Panc1 (cell line): ENCODE measurements at regions of chr7 and their contacts with region 1.

Region 1: DNA sequence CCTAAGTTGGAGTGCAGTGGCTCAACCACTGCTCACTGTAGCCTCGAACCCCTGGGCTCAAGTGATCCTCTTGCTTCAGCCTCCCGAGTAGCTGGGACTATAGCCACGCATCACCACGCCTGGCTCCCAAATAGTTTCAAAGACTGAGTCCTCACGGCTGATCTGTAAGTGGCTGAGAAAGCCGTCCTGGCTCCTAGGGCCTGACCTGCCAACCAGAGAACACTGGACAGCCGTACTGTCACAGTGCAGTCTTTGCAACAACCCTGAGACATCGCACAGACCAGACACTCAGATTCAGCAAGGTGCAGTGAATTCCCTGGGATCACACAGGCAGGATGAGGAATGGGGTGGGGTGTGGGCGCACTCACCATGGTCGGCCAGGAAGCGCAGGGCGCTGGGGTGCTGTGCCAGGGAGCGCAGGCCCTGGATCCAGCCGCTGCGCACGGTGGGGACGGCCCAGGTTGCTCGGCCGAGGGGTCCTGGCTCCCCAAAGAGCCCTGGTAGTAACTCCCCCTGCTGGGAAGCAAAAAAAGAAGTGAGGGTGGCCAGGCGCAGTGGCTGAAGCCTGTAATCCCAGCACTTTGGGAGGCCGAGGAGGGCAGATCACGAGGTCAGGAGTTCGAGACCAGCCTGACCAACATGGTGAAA is 10.7 kb downstream of the BRAT1 start:
- DNase-seq: no peak
- ATAC-seq: peak; percentile 6; the same call in 1 of the 2 replicates
- H3K4me3 ChIP-seq: no peak overlapping the region
- H3K27ac ChIP-seq: no peak overlapping the region
- H3K4me1 ChIP-seq: no peaks in the 10 kb centered on the region
- H3K27me3 ChIP-seq: no peaks in the 10 kb centered on the region
- CTCF ChIP-seq: no peak

Region 2: DNA sequence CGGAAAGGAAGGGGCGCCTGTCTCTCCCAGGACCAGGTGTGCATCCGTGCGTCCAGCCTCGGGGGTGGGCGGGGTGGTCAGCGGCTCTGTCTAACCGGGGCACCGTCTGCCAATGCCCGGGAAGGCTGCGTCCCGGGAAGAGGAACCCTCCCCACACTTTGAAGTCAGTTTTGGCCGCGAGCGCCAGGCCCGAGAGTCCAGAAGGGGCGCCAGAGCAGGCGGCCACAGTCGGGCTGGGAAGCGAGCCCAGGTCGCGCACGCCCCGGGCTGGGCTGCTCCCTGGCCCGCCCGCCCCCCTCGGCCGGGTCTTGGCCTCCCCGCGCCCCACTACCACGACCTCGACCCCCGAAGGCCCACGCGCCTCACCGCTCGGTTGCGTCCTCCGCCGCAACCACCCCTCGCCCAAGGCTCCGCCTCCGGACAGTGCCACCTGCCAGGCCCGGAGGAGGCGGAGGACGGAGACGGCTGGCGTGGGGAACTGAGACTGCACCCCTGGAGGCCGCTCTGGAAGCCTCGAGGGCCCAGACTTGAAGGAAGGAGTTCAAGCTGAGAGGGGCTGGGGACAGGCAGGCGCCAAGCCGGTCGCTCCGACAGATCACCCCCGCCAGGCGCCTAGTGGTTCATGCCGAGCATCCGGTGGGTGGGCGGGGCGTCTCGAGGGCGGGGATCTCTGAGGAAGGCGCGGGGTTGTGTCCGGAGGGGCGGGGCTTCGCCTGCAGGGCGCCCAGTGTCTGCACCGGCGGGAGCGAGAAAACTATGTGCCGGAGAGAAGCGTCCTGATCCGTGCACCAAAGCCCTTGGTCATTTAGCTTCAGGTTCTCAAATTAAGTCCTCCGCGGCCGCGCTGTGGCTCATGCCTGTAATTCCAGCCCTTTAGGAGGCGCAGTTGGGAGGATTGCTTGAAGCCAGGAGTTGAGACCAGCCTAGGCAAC is 10.7 kb after region 1 on chr7 and contains the start of gene BRAT1:
- CTCF ChIA-PET with region 1: interaction called, 15 read pairs
- POLR2A ChIA-PET with region 1: no interaction called
- in situ Hi-C with region 1: no loop called
- intact Hi-C with region 1: no loop called
- DNase-seq: peak; percentile 72
- ATAC-seq: peak; percentile 87
- H3K4me3 ChIP-seq: peak within 1 kb of the TSS; percentile 61 to 75
- H3K27ac ChIP-seq: peak within 1 kb of the TSS; percentile 96
- H3K4me1 ChIP-seq: peaks cover 16% of the 10 kb centered on the region
- H3K27me3 ChIP-seq: no peaks in the 10 kb centered on the region
- CTCF ChIP-seq: 0 out of 2 replicates have a peak, but pooled peaks have one; percentile 29
- total RNA-seq, gene BRAT1: 76.9 TPM